ENCODE measurements at regions of chr2 and their contacts with region 1.

Region 1: GRCh38 chr2:38535744-38536506 is 66.8 kb downstream of the HNRNPLL start:
- DNase-seq: peak; percentile 97
- H3K4me3 ChIP-seq: peak overlapping the region; percentile 57 to 89
- H3K27ac ChIP-seq: no peak overlapping the region
- H3K4me1 ChIP-seq: peaks cover 0 to 3% of the 10 kb centered on the region in 2 experiments; a peak in 1 of 4 replicates
- H3K27me3 ChIP-seq: no peaks in the 10 kb centered on the region
- CTCF ChIP-seq: peak; percentile 93
- EP300 ChIP-seq: no peak
- RAD21 ChIP-seq: peak; percentile 84

Region 2: DNA sequence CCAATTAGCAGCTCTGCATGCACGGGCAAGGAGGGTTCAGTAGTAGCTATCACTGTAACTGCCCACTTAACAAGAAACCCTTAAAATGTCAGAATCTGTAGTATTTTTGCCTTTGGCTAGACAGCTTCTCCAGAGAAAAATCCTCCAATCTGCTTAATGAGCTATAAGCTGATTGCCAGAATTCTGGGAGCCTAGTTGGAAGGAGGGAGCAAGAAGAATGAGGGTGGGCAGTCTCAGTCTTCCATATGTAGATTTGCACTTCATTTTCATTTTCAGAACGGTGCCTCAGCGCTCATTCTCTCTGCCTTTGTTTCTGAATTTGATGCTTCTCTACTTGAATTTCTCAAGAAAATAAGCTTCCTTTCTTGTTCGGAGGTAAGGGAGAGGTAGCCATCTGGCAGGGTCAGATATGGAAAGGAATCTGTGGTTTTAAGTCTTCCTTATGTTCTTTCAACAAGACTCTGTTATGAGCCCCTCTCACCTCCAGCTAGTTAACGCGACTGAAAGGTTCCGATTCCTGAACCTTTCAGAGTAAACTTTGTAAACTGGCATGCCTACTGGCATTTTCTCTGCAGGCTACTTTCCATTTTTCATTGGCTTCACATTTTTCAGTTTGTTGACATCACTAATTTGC is 13.3 kb after region 1 on chr2:
- CTCF ChIA-PET with region 1: interaction called, 47 read pairs
- POLR2A ChIA-PET with region 1: no interaction called
- DNase-seq: no peak
- H3K4me3 ChIP-seq: no peak overlapping the region
- H3K27ac ChIP-seq: no peak overlapping the region
- H3K4me1 ChIP-seq: peaks cover 0 to 2% of the 10 kb centered on the region in 2 experiments; a peak in 1 of 4 replicates
- H3K27me3 ChIP-seq: no peaks in the 10 kb centered on the region
- CTCF ChIP-seq: no peak
- EP300 ChIP-seq: no peak
- RAD21 ChIP-seq: no peak

Region 3: GRCh38 chr2:38561691-38562090 is 25.8 kb after region 1 on chr2:
- CTCF ChIA-PET with region 1: interaction called, 28 read pairs
- POLR2A ChIA-PET with region 1: no interaction called
- DNase-seq: no peak
- H3K4me3 ChIP-seq: no peak overlapping the region
- H3K27ac ChIP-seq: no peak overlapping the region
- H3K4me1 ChIP-seq: no peaks in the 10 kb centered on the region; a peak in 1 of 4 replicates
- H3K27me3 ChIP-seq: no peaks in the 10 kb centered on the region
- CTCF ChIP-seq: no peak
- EP300 ChIP-seq: no peak
- RAD21 ChIP-seq: no peak

Region 4: GRCh38 chr2:38581193-38582147 is 45.5 kb after region 1 on chr2:
- CTCF ChIA-PET with region 1: interaction called, 20 read pairs
- POLR2A ChIA-PET with region 1: no interaction called
- DNase-seq: peak; percentile 44
- H3K4me3 ChIP-seq: no peak overlapping the region
- H3K27ac ChIP-seq: peak overlapping the region in 1 of 2 experiments; percentile 3; a peak in 1 of 4 replicates
- H3K4me1 ChIP-seq: peaks cover 0 to 13% of the 10 kb centered on the region in 2 experiments; a peak in 2 of 4 replicates
- H3K27me3 ChIP-seq: no peaks in the 10 kb centered on the region
- CTCF ChIP-seq: peak; percentile 89
- EP300 ChIP-seq: no peak
- RAD21 ChIP-seq: peak; percentile 89

Region 5: DNA sequence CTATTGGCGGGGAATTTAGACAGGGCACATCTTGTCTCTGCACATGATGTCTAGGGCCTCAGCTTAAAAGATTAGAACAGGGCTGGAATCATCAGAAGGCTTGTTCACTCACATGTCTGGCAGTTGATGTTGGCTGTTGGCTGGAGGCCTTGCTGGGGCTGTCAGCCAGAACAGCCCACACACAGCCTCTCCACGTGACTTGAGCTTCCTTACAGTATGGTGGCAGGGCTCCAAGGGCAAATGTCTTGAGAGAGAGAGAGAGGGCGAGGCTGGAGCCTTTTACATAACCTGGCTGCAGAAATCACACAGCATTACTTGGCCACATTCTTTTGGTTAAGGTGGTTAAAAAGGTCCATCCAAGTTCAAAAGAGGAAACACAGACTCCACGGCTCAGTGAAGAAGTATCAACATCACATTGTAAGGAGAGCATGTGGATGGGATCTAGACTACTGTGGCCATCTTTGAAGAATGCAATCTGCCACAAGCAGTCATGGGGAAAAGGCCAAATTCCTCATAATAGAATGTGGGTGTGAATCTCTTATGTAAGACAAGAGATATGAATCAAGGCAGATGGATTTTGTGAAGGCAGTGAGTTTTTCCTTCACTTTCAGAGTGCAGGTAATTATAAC is 184.8 kb after region 1 on chr2:
- CTCF ChIA-PET with region 1: interaction called, 18 read pairs
- POLR2A ChIA-PET with region 1: no interaction called
- DNase-seq: no peak
- H3K4me3 ChIP-seq: no peak overlapping the region
- H3K27ac ChIP-seq: peak overlapping the region in 1 of 2 experiments; percentile 3; a peak in 1 of 4 replicates
- H3K4me1 ChIP-seq: no peaks in the 10 kb centered on the region
- H3K27me3 ChIP-seq: no peaks in the 10 kb centered on the region
- CTCF ChIP-seq: no peak
- EP300 ChIP-seq: no peak
- RAD21 ChIP-seq: no peak

Region 6: GRCh38 chr2:38750891-38751595 is 215.1 kb after region 1 on chr2 and contains the start of gene SRSF7:
- CTCF ChIA-PET with region 1: interaction called, 12 read pairs
- POLR2A ChIA-PET with region 1: no interaction called
- DNase-seq: peak; percentile 98
- H3K4me3 ChIP-seq: peak within 1 kb of the TSS; percentile 92 to 94
- H3K27ac ChIP-seq: peak within 1 kb of the TSS; percentile 92 to 100
- H3K4me1 ChIP-seq: peaks cover 41 to 43% of the 10 kb centered on the region in 2 experiments
- H3K27me3 ChIP-seq: no peaks in the 10 kb centered on the region
- CTCF ChIP-seq: no peak
- EP300 ChIP-seq: peak; percentile 30 to 38; a peak in 3 of 4 replicates
- RAD21 ChIP-seq: no peak
- polyA plus RNA-seq, gene SRSF7: 199 and 212 TPM in 2 replicates